ENCODE measurements at regions of chr18 and their contacts with region 1.

Region 1: GRCh38 chr18:2636126-2636631 is 19.3 kb upstream of the SMCHD1 start:
- DNase-seq: no peak
- ATAC-seq: peak; percentile 46
- H3K4me3 ChIP-seq: peak overlapping the region; percentile 44
- H3K4me3 Mint-ChIP-seq: peak overlapping the region; percentile 80
- H3K27ac ChIP-seq: peak overlapping the region; percentile 91 to 97
- H3K27ac Mint-ChIP-seq: no peak overlapping the region
- H3K4me1 ChIP-seq: peaks cover 79% of the 10 kb centered on the region
- H3K4me1 Mint-ChIP-seq: peaks cover 99% of the 10 kb centered on the region
- H3K27me3 ChIP-seq: no peaks in the 10 kb centered on the region
- H3K27me3 Mint-ChIP-seq: no peaks in the 10 kb centered on the region
- CTCF ChIP-seq: no peak

Region 2: GRCh38 chr18:2431806-2432205 is 204.4 kb before region 1 on chr18:
- CTCF ChIA-PET with region 1: no interaction called
- POLR2A ChIA-PET with region 1: no interaction called
- intact Hi-C with region 1: no loop called
- DNase-seq: no peak
- ATAC-seq: no peak
- H3K4me3 ChIP-seq: no peak overlapping the region
- H3K4me3 Mint-ChIP-seq: no peak overlapping the region
- H3K27ac ChIP-seq: no peak overlapping the region
- H3K27ac Mint-ChIP-seq: no peak overlapping the region
- H3K4me1 ChIP-seq: no peaks in the 10 kb centered on the region
- H3K4me1 Mint-ChIP-seq: no peaks in the 10 kb centered on the region
- H3K27me3 ChIP-seq: no peaks in the 10 kb centered on the region
- H3K27me3 Mint-ChIP-seq: peaks cover 11% of the 10 kb centered on the region
- CTCF ChIP-seq: no peak

Region 3: GRCh38 chr18:2482706-2483439 is 153.3 kb before region 1 on chr18:
- CTCF ChIA-PET with region 1: no interaction called
- POLR2A ChIA-PET with region 1: no interaction called
- intact Hi-C with region 1: no loop called
- DNase-seq: no peak
- ATAC-seq: no peak
- H3K4me3 ChIP-seq: no peak overlapping the region
- H3K4me3 Mint-ChIP-seq: no peak overlapping the region
- H3K27ac ChIP-seq: no peak overlapping the region
- H3K27ac Mint-ChIP-seq: no peak overlapping the region
- H3K4me1 ChIP-seq: no peaks in the 10 kb centered on the region
- H3K4me1 Mint-ChIP-seq: no peaks in the 10 kb centered on the region
- H3K27me3 ChIP-seq: peaks cover 2 to 10% of the 10 kb centered on the region in 2 experiments
- H3K27me3 Mint-ChIP-seq: peaks cover 64% of the 10 kb centered on the region
- CTCF ChIP-seq: no peak

Region 4: GRCh38 chr18:2571200-2572143 is 64.7 kb before region 1 on chr18 and contains the starts of genes METTL4 and NDC80:
- CTCF ChIA-PET with region 1: interaction called, 10 read pairs
- POLR2A ChIA-PET with region 1: interaction called, 137 read pairs
- intact Hi-C with region 1: loop called (anchors 1 to 5 kb)
- DNase-seq: peak; percentile 71 to 94 (median 78)
- ATAC-seq: peak; percentile 81
- H3K4me3 ChIP-seq: peak within 1 kb of the TSS; percentile 90
- H3K4me3 Mint-ChIP-seq: peak within 1 kb of the TSS; percentile 100
- H3K27ac ChIP-seq: peak within 1 kb of the TSS; percentile 90 to 99
- H3K27ac Mint-ChIP-seq: peak within 1 kb of the TSS; percentile 99
- H3K4me1 ChIP-seq: peaks cover 27% of the 10 kb centered on the region
- H3K4me1 Mint-ChIP-seq: peaks cover 70% of the 10 kb centered on the region
- H3K27me3 ChIP-seq: no peaks in the 10 kb centered on the region
- H3K27me3 Mint-ChIP-seq: no peaks in the 10 kb centered on the region
- CTCF ChIP-seq: no peak
- total RNA-seq, gene METTL4: 6.5 to 10.4 TPM
- total RNA-seq, gene NDC80: 6.3 to 7.5 TPM

Region 5: GRCh38 chr18:2606335-2606734 is 29.8 kb before region 1 on chr18:
- CTCF ChIA-PET with region 1: interaction called, 8 read pairs
- POLR2A ChIA-PET with region 1: interaction called, 250 read pairs
- intact Hi-C with region 1: loop called (anchors 1 to 5 kb)
- DNase-seq: peak in 3 of 14 experiments; percentile 53 to 62 (median 58)
- ATAC-seq: peak; percentile 70
- H3K4me3 ChIP-seq: no peak overlapping the region
- H3K4me3 Mint-ChIP-seq: peak overlapping the region; percentile 57
- H3K27ac ChIP-seq: peak overlapping the region in 1 of 2 donors; percentile 48
- H3K27ac Mint-ChIP-seq: peak overlapping the region; percentile 91
- H3K4me1 ChIP-seq: peaks cover 12% of the 10 kb centered on the region
- H3K4me1 Mint-ChIP-seq: peaks cover 58% of the 10 kb centered on the region
- H3K27me3 ChIP-seq: no peaks in the 10 kb centered on the region
- H3K27me3 Mint-ChIP-seq: no peaks in the 10 kb centered on the region
- CTCF ChIP-seq: no peak

Region 6: DNA sequence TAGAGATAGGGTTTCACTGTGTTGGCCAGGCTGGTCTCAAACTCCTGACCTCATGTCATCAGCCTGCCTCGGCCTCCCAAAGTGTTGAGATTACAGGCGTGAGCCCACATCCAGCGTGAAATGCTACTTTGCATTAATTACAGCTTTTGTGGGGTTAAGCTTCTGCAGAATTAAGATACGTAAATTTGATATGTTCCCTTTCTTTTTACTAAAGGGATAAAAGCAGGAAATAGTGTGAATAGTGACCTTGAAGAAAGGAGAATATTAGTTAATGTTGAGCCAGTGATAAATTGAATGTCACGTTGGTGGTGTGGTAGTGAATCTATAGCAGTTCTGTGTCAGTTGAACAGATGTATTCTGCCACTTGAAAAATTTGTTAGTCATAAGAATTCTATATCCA is 36.2 kb after region 1 on chr18:
- CTCF ChIA-PET with region 1: no interaction called
- POLR2A ChIA-PET with region 1: interaction called, 15 read pairs
- intact Hi-C with region 1: no loop called
- DNase-seq: no peak
- ATAC-seq: no peak
- H3K4me3 ChIP-seq: no peak overlapping the region
- H3K4me3 Mint-ChIP-seq: no peak overlapping the region
- H3K27ac ChIP-seq: no peak overlapping the region
- H3K27ac Mint-ChIP-seq: no peak overlapping the region
- H3K4me1 ChIP-seq: peaks cover 6% of the 10 kb centered on the region
- H3K4me1 Mint-ChIP-seq: peaks cover 81% of the 10 kb centered on the region
- H3K27me3 ChIP-seq: no peaks in the 10 kb centered on the region
- H3K27me3 Mint-ChIP-seq: no peaks in the 10 kb centered on the region
- CTCF ChIP-seq: no peak

Region 7: DNA sequence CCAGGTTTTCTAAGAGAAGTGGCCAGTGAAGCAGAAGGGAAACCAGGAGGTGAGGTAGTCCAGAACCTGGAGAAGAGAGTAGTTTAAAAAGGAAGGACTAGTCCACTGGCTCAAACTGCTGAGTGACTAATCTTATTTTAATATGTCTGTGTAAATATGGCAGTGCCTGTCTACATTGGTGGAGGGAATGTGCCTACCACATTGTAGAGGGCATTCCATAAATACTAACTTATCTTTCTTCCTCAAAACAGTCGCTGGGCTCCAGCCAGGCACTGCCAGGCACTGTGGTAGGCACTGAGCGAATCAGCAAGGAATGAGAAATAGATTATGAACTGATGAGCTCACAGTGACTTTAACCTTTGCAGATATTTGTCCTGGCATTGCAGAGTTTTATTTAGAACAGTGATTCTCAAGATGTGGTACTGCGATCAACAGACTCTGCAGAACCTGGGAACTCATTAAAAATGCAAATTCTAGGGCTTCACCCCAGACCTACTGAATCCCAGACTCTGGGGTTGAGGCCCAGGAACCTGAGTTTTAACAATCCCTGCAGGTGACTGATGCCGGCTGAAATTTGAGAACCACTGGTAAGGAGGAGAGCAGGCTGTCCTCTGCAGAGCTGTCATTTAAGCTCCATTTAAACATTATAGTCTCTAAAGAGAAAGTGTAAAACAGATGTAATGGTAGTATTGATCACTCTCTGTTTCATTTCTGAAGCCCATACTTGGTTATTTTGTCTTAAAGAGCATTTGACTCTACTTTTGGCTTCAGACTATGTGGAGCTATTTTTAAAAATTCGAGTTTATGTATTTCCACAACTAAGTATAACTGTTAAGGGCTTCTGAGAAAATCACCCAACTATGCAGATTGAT is 1331.0 kb after region 1 on chr18:
- CTCF ChIA-PET with region 1: no interaction called
- POLR2A ChIA-PET with region 1: no interaction called
- intact Hi-C with region 1: no loop called
- DNase-seq: no peak
- ATAC-seq: no peak
- H3K4me3 ChIP-seq: no peak overlapping the region
- H3K4me3 Mint-ChIP-seq: no peak overlapping the region
- H3K27ac ChIP-seq: no peak overlapping the region
- H3K27ac Mint-ChIP-seq: no peak overlapping the region
- H3K4me1 ChIP-seq: no peaks in the 10 kb centered on the region
- H3K4me1 Mint-ChIP-seq: no peaks in the 10 kb centered on the region
- H3K27me3 ChIP-seq: no peaks in the 10 kb centered on the region
- H3K27me3 Mint-ChIP-seq: peaks cover 12% of the 10 kb centered on the region
- CTCF ChIP-seq: no peak